ENCODE measurements at regions of chr11 and their contacts with region 1.

Region 1: GRCh38 chr11:116643521-116643920 is 129.3 kb downstream of the BUD13 start:
- DNase-seq: peak in 1 of 2 donors; percentile 84
- H3K4me3 ChIP-seq: no peak overlapping the region
- CTCF ChIP-seq: no peak
- POLR2A ChIP-seq: no peak

Region 2: DNA sequence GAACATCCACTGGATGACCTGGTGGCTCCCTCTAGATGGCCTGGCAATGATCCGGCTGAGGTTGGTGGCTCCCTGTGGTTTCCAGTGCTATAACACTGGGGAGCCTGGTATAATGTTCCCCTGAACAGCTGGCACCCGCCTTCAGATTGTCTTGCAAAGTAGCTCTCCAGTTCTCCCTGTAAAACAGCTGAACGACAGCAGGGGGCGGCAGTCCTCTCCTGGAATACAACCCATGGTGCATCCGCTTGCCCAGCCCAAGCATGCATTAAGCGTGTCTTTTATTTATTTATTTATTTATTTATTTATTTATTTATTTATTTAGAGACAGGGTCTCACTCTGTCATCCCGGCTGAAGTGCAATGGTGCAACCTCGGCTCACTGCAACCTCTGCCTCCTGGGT is 129.6 kb before region 1 on chr11:
- intact Hi-C with region 1: no loop called
- DNase-seq: peak in 1 of 2 donors; percentile 73
- H3K4me3 ChIP-seq: no peak overlapping the region
- CTCF ChIP-seq: no peak
- POLR2A ChIP-seq: no peak

Region 3: GRCh38 chr11:116595305-116595880 is 48.1 kb before region 1 on chr11:
- intact Hi-C with region 1: no loop called
- DNase-seq: no peak
- H3K4me3 ChIP-seq: no peak overlapping the region
- CTCF ChIP-seq: no peak
- POLR2A ChIP-seq: no peak

Region 4: DNA sequence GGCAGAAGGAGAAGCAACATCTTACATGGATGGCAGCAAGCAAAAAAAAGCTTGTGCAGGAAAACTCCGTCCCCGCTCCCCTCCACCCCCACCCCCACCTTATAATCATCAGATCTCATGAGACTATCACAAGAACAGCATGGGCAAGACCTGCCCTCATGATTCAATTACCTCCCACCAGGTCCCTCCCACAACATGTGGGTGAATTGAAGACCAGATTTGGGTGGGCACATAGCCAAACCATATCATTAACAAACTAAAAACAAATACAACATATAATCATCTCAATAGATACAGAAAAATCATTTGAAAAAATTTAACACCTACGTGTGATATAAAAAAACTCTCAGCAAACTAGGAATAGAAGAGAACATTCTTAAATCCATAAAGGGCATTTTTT is 40.5 kb after region 1 on chr11:
- intact Hi-C with region 1: loop called (anchors 1 kb)
- DNase-seq: no peak
- H3K4me3 ChIP-seq: no peak overlapping the region
- CTCF ChIP-seq: no peak
- POLR2A ChIP-seq: no peak

Region 5: DNA sequence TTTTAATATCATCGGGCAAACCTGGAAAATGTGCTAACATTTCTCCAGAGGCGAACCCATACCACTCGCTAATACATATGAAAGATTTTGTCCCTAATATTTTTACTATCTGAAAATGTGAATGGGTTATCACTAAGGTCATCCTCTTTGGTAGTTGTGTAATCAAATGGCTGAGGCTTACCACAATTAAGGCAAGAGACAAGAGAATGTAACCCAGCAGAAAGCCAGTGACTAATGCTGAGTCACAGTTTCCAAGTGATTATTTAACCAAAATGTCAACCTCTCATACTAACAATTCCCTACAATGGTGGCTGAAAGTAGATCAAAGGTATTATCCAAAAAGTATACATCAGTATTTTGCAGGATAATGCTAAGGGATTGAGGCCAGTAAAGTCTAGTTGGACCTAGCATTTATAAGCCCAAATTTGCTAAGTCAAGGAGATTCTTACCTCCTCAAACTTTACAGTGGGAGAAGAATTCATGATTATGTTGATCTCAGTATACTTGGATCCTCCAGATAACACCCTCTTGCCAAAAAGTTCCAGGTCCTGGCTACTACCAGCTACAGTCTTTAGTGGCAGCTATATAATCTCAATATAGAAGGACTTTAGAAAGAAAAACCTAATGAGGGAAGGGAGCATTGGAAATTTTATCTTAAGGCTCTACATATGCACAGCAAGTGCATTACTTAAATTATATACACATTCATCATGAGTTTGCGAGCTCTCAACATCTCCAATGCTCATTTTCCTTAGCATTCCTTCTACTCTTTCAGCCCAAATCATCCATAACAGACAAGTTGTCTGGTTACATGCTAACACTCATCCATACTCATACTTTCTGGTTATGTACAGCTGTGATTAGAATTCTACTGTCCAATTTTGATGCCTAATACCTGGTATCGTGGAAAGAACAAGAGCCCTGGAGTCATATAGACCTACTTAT is 429.3 kb after region 1 on chr11:
- intact Hi-C with region 1: no loop called
- DNase-seq: no peak
- H3K4me3 ChIP-seq: no peak overlapping the region
- CTCF ChIP-seq: no peak
- POLR2A ChIP-seq: no peak

Measured in lower leg skin (tissue), 4 donors.